GM13977 (cell line): ENCODE measurements at regions of chr5 and their contacts with region 1.

Region 1: DNA sequence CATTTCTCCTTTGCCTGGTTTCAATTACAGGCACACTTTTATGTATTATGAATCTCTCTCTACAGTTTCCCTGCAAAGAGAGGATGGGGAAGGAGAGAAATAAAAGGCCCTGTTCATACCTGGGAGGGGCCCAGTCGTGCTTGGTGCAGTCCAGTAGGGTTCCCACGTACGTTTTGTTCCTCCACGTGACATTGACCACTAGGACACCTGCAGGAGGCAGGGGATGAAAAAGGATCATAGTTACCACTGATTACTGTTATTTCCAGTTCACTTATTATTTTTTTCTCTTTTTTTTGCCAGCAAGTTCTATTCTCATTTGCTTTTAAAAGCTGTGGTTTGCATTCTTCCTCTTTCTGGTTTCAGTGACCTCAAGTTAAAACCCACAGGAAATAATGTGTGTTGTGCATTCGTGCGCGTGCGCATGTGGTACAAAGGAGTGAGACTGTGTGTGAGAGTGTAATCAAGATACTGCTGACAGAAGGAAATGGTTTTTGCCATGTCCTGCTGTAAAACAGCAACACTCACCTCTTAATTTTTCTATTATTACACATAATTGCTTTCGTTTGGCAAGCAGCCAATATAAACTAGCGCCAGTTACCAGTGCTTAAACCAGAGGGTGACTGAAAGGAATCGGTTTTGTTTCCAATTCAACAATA is 96.8 kb downstream of the ZNF608 start:
- DNase-seq: peak; percentile 84
- CTCF ChIP-seq: no peak

Region 2: DNA sequence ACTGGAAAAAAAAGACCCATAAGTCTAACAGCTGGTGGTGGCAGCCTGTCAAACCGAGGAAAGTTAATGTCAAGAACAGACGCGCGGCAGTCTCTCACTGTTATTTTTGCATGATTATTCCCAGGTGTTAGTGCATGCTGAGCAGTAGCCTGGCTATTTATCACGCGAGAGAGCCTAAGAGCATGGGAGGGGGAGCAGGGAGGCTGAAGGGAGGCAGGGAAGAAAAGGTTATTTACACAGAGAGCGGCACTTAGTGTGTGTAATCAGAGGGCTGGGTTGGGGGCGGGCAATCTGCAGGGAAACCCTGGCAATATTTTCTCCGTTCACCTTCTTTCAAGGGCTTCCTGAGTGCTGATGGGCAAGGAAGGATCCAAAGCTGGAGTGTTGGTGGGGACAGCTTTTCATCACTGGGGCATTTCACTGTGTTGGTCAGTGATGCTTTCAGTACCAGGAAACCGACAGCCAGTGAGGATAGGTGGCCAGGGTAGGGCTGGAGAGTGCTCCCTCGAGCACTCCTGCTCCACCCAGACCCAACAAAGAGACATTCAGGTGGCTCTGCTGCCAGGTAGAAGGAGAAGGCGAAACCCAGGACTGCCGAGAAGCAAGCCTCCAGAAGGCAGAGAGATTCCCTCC is 57.2 kb after region 1 on chr5:
- in situ Hi-C with region 1: loop called (anchors 10 kb)
- DNase-seq: no peak
- CTCF ChIP-seq: no peak